BJ (cell line): ENCODE measurements at regions of chr11 and their contacts with region 1.

Region 1: DNA sequence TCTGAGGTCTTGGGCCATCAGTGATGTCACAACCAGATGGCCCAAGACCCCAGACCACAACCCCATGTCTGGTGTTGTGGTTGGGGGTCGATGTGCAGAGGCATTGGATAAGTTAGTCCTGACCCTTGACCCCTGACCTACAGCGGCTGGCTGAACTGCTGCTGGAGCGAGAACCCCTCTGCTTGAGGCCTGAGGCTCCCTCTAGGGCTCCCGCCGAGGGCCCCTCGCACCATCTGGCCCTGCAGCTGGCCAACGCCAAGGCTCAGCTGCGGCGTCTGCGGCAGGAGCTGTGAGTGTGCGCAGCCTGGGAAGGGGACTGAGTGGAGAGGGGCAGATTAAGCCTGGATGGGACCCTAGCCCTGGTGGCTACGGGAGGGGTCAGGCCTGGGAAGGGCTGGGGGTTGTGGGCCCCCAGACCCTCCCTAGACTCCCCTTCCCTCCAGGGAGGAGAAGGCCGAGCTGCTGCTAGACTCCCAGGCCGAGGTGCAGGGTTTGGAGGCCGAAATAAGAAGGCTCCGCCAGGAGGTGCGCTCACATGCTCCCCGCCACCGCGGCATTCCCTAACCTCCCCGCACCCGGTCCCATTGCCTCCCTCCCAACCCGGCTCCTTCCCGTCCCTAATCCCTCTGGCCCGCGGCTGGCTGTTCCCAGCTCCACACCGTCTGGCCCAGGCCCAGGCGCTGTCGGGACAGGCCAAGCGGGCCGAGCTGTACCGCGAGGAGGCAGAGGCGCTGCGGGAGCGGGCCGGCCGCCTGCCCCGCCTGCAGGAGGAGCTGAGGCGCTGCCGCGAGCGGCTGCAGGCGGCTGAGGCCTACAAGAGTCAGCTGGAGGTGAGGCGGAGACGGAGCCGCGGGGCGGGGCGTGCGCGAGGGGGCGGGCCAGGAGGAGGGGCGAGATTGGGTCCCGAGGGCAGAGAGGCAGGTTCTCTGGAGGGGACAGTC is 2.1 kb downstream of the CCDC88B start:
- DNase-seq: peak; percentile 40
- H3K4me3 ChIP-seq: peak overlapping the region; percentile 41
- H3K27me3 ChIP-seq: peaks cover under 1% of the 10 kb centered on the region; the same call in 1 of the 2 replicates
- CTCF ChIP-seq: peak; percentile 31; the same call in 1 of the 2 replicates

Region 2: DNA sequence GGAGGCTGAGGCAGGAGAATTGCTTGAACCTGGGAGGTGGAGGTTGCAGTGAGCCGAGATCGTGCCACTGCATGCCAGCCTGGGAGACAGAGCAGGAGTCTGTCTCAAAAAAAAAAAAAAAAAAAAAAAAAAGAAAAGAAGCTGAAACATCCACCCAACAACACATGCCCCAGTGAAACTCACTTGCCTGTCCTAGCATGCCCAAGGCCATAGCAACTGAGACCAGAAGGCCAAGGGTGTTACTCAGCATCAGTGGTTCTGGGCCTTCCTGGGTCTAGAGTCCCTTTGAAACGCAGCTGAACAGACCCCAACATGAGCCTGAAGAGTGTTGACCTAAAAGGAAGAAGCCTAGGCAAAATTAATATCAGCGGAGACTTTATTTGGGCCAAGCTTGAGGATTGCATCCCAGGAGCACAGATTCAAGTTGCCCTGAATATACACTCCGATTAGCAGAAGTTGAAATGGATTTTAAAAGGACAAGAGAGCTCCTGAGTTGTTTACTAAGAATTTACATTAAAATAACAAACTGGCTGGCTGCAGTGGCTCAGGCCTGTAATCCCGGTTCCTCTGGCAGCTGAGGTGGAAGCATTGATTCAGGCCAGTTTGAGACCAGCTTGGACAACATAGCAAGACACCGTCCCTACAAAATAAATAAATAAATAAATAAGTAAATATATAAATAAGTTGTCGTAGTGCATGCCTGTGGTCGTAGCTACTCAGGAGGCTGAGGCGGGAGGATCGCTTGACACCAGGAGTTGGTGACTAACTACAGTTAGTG is 17.2 kb before region 1 on chr11:
- CTCF ChIA-PET with region 1: interaction called, 3 read pairs
- POLR2A ChIA-PET with region 1: interaction called, 19 read pairs
- DNase-seq: no peak
- H3K4me3 ChIP-seq: no peak overlapping the region
- H3K27me3 ChIP-seq: no peaks in the 10 kb centered on the region
- CTCF ChIP-seq: no peak

Region 3: DNA sequence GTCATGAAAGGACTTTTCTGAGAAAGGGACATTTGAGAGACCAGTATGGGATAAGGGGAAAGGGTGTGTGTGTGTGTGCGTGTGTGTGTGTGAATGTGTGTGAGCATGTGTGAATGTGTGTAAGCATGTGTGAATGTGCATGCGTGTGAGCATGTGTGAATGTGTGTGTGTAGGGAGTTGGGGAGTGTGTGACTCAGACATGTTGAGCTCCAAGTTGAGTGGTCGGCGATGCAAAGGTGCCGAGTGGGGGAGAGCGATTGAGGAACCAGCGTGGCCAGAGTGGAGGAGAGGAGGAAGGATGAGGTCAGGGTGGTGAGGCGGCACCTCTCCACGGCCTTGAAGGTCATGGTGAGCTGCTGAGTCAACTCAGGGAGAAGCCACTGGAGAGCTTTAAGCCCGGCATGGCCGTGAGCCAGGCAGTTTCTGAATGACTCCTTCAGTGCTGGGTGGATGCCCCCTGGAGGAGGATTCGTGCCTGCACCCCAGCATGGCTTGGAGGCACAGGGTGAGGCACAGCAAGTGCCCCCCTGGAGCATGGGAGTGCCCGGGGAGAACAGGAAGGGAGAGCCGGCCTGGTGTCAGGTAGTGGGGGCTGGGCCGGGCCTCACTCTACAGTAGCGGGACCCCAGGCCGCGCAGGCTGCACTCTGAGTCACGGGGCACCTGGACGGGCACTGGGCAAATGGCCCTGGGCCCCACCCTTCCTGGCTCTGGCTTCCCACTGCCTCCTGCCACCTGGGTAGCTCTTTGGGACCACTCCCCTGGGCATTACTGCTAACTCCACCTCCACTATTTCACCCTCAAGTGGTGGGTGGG is 10.4 kb before region 1 on chr11:
- CTCF ChIA-PET with region 1: interaction called, 28 read pairs
- POLR2A ChIA-PET with region 1: interaction called, 19 read pairs
- DNase-seq: no peak
- H3K4me3 ChIP-seq: no peak overlapping the region
- H3K27me3 ChIP-seq: no peaks in the 10 kb centered on the region
- CTCF ChIP-seq: peak; percentile 81

Region 4: GRCh38 chr11:64358907-64359711 is 17.0 kb after region 1 on chr11 and contains the start of gene RPS6KA4:
- CTCF ChIA-PET with region 1: interaction called, 71 read pairs
- POLR2A ChIA-PET with region 1: interaction called, 24 read pairs
- DNase-seq: no peak
- H3K4me3 ChIP-seq: peak within 1 kb of the TSS; percentile 89
- H3K27me3 ChIP-seq: no peaks in the 10 kb centered on the region
- CTCF ChIP-seq: no peak
- polyA plus RNA-seq, gene RPS6KA4: 22.9 and 33.8 TPM in 2 replicates

Region 5: DNA sequence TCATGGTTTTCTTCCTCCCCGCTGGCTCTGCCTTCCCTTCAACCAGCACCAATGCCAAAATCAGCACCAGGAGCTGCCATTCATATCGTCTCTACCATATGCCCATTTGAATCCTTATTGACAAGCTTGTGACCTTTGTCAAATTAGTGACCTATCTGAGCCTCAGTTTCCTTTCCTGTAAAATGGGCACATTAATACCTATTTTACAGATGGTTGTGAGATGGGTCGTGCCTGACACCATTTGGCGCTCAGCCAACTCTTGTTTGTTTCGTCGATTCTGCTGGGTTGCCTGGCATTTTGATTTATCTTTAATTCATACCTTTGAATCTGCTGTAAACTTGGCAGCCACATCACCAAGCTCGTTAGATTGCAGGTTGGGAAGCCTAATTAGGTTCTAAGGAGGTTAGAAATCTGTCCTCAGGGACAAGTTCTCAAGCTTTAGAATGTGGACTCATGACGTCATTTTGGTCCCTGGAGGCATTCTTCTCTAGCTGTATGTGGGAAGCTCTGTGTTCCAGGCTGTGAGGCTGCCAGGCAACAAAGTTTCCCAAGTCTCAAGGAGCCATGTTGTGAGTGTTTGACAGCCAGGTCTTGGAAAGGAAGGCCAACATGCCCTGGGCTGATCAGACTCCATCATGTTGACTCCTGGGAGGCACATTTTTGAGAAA is 77.8 kb after region 1 on chr11:
- CTCF ChIA-PET with region 1: no interaction called
- POLR2A ChIA-PET with region 1: no interaction called
- DNase-seq: no peak
- H3K4me3 ChIP-seq: no peak overlapping the region
- H3K27me3 ChIP-seq: no peaks in the 10 kb centered on the region; the same call in 1 of the 2 replicates
- CTCF ChIP-seq: no peak

Region 6: GRCh38 chr11:64489831-64490441 is 147.8 kb after region 1 on chr11:
- CTCF ChIA-PET with region 1: no interaction called
- POLR2A ChIA-PET with region 1: no interaction called
- DNase-seq: no peak
- H3K4me3 ChIP-seq: no peak overlapping the region
- H3K27me3 ChIP-seq: peaks cover 9% of the 10 kb centered on the region
- CTCF ChIP-seq: peak; percentile 74

Region 7: GRCh38 chr11:64661146-64661545 is 319.0 kb after region 1 on chr11:
- CTCF ChIA-PET with region 1: no interaction called
- POLR2A ChIA-PET with region 1: no interaction called
- DNase-seq: no peak
- H3K4me3 ChIP-seq: no peak overlapping the region
- H3K27me3 ChIP-seq: no peaks in the 10 kb centered on the region
- CTCF ChIP-seq: no peak